Activated T-helper 2 cell treated with anti-CD3 and anti-CD28 coated beads, Interferon-gamma antibody, Interleukin-2, Interleukin-4, amounts not matched to agents 10 μg/mL and 5 μg/mL and 100 μg/mL, durations not matched to agents 14 hours and 24 hours and 36 hours (primary cell): ENCODE measurements at regions of chr20 and their contacts with region 1.

Region 1: DNA sequence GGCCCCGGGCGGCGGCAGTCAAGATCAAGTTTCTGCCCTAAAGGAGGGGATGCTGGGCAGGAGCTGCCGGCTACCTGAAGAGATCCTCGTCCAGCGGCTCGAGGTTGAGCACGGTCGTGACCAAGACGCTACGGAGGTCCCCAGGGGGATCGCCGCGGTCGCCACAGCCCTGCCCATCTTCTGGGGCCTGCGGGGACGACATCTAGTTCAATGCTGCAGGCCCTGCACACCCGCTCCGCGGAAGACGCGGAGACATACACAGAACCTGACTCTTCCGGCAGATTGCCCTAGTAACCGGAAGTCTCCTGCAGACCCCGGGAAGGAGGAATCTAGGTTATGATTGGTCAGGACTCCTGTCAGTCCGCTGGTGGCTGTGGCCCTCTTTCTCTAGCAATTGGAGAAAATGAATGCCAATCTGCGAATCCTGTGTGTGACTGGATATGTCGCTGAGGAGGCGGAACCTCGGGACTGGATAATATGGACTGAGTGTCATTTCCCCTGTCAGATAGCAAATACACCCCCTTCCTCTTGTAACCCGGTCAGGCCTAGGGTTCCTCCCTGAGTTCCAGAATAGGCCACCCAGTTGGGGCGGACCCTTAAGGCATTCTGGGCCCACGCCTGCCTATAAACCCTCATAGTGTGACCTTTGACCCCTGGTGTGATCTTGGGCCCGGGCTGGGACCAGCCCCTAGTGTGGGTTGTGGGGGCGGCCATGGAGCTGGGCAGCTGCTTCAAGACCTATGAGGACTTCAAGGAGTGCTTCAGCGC is at the starts of genes ACOT8 and ZSWIM3:
- DNase-seq: peak; percentile 95
- H3K4me3 Mint-ChIP-seq: peak within 1 kb of the TSS; percentile 97
- H3K27ac Mint-ChIP-seq: peak within 1 kb of the TSS; percentile 99
- H3K4me1 Mint-ChIP-seq: peaks cover 30% of the 10 kb centered on the region
- H3K27me3 Mint-ChIP-seq: no peaks in the 10 kb centered on the region
- total RNA-seq, gene ACOT8: 28.0 and 29.1 TPM in 2 replicates
- total RNA-seq, gene ZSWIM3: 6.2 and 6.3 TPM in 2 replicates

Region 2: GRCh38 chr20:45788351-45788750 is 68.9 kb before region 1 on chr20:
- intact Hi-C with region 1: no loop called
- DNase-seq: no peak
- H3K4me3 Mint-ChIP-seq: no peak overlapping the region
- H3K27ac Mint-ChIP-seq: no peak overlapping the region
- H3K4me1 Mint-ChIP-seq: peaks cover 10% of the 10 kb centered on the region
- H3K27me3 Mint-ChIP-seq: no peaks in the 10 kb centered on the region

Region 3: GRCh38 chr20:45801851-45802250 is 55.4 kb before region 1 on chr20:
- intact Hi-C with region 1: no loop called
- DNase-seq: no peak
- H3K4me3 Mint-ChIP-seq: no peak overlapping the region
- H3K27ac Mint-ChIP-seq: no peak overlapping the region
- H3K4me1 Mint-ChIP-seq: peaks cover 7% of the 10 kb centered on the region
- H3K27me3 Mint-ChIP-seq: no peaks in the 10 kb centered on the region

Region 4: GRCh38 chr20:45833883-45834796 is 23.2 kb before region 1 on chr20:
- intact Hi-C with region 1: loop called (anchors 2 kb)
- DNase-seq: peak; percentile 25
- H3K4me3 Mint-ChIP-seq: peak overlapping the region; percentile 81
- H3K27ac Mint-ChIP-seq: no peak overlapping the region
- H3K4me1 Mint-ChIP-seq: peaks cover 15% of the 10 kb centered on the region
- H3K27me3 Mint-ChIP-seq: peaks cover 9% of the 10 kb centered on the region

Region 5: GRCh38 chr20:45890985-45891983 is 34.0 kb after region 1 on chr20 and contains the starts of genes CTSA and NEURL2:
- intact Hi-C with region 1: loop called (anchors 1 kb)
- DNase-seq: peak; percentile 78
- H3K4me3 Mint-ChIP-seq: peak within 1 kb of the TSS; percentile 87
- H3K27ac Mint-ChIP-seq: peak within 1 kb of the TSS; percentile 84
- H3K4me1 Mint-ChIP-seq: peaks cover 25% of the 10 kb centered on the region
- H3K27me3 Mint-ChIP-seq: no peaks in the 10 kb centered on the region
- total RNA-seq, gene CTSA: 49.0 and 51.9 TPM in 2 replicates
- total RNA-seq, gene NEURL2: 2.0 and 3.3 TPM in 2 replicates

Region 6: GRCh38 chr20:45934586-45935415 is 77.5 kb after region 1 on chr20 and contains the start of gene PCIF1:
- intact Hi-C with region 1: loop called (anchors 1 kb)
- DNase-seq: peak; percentile 97
- H3K4me3 Mint-ChIP-seq: peak within 1 kb of the TSS; percentile 92
- H3K27ac Mint-ChIP-seq: peak within 1 kb of the TSS; percentile 94
- H3K4me1 Mint-ChIP-seq: peaks cover 25% of the 10 kb centered on the region
- H3K27me3 Mint-ChIP-seq: no peaks in the 10 kb centered on the region
- total RNA-seq, gene PCIF1: 27.5 and 28.6 TPM in 2 replicates

Region 7: DNA sequence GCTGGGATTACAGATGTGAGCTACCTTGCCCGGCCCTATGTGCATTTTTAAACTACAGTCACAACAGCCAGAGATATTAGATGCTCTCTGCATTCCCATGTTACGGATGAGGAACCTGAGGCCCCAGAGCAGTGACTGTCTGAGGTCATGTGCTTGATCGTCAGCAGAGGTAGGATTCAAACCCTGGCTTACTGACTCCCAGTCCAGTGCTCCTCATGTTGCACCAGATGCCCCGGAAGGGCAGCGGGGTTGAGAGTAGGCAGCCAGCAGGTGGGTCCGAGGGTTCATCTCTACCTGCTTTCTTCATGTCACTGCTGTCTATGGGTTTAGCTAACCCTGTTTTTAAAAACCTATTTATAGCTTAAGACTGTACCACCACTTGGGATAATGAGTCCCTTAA is 124.0 kb after region 1 on chr20:
- intact Hi-C with region 1: no loop called
- DNase-seq: no peak
- H3K4me3 Mint-ChIP-seq: no peak overlapping the region
- H3K27ac Mint-ChIP-seq: no peak overlapping the region
- H3K4me1 Mint-ChIP-seq: peaks cover 6% of the 10 kb centered on the region
- H3K27me3 Mint-ChIP-seq: peaks cover 19% of the 10 kb centered on the region